PC-3 (cell line): ENCODE measurements at regions of chr19 and their contacts with region 1.

Region 1: DNA sequence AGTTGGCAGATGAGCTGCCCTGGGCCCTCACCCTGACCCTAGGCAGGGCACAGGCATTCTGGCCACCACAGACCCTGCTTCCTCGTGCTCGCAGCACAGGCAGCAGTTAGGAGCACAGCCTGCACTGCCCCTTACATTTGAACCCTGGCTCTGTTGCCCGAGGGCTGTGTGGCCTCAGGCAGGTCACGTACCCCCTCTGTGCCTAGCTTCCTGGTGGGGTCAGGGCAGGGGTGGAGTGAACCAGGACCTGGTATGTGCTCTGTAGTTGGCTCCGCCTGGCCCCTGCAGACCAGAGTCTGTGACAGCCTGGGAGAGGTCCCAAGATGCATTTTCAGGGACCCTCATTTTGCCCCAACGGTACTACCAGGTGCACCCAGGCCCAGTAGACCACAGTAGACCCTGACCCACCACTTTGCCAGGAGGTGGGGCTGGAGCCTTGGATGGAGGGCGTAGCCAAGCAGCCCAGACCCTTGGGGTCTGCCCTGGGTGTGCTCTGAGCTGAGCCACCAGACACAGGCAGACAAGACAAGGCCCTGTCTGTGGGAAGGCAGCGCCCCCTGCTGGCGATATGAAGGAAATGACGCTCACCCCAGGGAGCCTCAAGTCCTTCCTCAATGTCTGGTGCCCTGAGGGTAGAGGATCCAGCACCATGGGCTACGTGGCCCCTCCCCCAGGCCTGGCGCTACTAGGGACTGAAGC is 9.1 kb downstream of the LYL1 start:
- DNase-seq: peak; percentile 95
- ATAC-seq: peak; percentile 74
- H3K4me3 ChIP-seq: no peak overlapping the region
- H3K27ac ChIP-seq: no peak overlapping the region
- H3K4me1 ChIP-seq: peaks cover 11% of the 10 kb centered on the region; the same call in 1 of the 2 replicates
- H3K27me3 ChIP-seq: no peaks in the 10 kb centered on the region
- CTCF ChIP-seq: peak; percentile 100

Region 2: DNA sequence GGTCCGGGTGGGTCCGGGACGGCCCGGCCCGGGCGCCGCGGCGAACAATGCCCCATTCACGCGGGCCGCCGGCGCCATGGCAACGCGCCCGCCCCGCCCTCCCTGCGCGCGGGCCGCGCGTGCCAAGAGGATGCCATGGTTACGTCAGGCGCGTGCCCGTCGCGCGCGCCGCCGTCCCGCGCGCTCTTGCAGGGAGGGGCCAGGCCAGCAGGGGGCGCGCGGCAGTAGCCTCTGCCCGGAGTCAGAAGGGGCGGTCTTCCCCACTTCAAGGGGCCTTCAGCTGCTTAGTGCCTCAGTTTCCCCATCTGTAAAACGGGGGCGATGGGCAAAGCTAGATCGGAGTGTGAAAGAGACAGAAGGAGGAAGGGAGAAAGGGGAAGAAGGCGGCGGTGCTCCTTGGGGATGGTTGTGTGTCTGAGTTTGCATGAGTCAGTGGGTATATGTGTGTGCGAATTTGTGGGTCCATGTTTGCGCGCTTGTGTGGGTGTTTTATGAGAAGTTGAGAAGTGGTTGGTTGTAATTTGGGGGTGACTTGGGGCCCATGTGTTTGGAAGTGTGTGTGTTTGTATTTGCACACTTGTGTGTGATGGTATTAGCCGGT is 109.9 kb before region 1 on chr19:
- CTCF ChIA-PET with region 1: interaction called, 53 read pairs
- POLR2A ChIA-PET with region 1: no interaction called
- intact Hi-C with region 1: loop called (anchors 1 kb)
- DNase-seq: peak; percentile 89
- ATAC-seq: peak; percentile 84
- H3K4me3 ChIP-seq: peak overlapping the region; percentile 61
- H3K27ac ChIP-seq: no peak overlapping the region
- H3K4me1 ChIP-seq: no peaks in the 10 kb centered on the region
- H3K27me3 ChIP-seq: no peaks in the 10 kb centered on the region
- CTCF ChIP-seq: peak; percentile 94

Region 3: DNA sequence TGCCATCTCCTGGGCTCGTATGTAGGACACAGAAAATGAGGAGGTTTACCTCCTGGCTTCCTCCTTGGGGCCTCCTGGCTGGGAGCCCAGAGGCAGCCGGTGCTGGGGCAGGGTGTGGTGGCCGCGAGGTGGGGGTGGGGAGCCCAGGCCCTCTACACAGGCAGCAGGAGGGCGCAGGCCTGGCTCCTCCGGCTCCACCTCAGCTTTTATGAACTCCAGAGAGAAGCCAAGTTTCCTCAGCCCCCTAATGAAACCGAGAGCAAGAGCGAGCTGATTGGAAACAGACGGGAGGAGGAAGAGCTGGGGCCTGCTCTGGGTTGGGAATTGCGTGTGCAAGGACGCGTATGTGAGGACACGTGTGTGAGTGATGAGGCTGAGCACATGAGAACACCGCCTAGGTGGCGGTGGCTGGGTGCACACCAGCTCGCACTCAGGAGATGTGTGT is 14.0 kb before region 1 on chr19:
- CTCF ChIA-PET with region 1: no interaction called
- POLR2A ChIA-PET with region 1: no interaction called
- intact Hi-C with region 1: no loop called
- DNase-seq: no peak
- ATAC-seq: peak; percentile 43
- H3K4me3 ChIP-seq: no peak overlapping the region
- H3K27ac ChIP-seq: no peak overlapping the region
- H3K4me1 ChIP-seq: peaks cover 6% of the 10 kb centered on the region
- H3K27me3 ChIP-seq: no peaks in the 10 kb centered on the region
- CTCF ChIP-seq: no peak

Region 4: DNA sequence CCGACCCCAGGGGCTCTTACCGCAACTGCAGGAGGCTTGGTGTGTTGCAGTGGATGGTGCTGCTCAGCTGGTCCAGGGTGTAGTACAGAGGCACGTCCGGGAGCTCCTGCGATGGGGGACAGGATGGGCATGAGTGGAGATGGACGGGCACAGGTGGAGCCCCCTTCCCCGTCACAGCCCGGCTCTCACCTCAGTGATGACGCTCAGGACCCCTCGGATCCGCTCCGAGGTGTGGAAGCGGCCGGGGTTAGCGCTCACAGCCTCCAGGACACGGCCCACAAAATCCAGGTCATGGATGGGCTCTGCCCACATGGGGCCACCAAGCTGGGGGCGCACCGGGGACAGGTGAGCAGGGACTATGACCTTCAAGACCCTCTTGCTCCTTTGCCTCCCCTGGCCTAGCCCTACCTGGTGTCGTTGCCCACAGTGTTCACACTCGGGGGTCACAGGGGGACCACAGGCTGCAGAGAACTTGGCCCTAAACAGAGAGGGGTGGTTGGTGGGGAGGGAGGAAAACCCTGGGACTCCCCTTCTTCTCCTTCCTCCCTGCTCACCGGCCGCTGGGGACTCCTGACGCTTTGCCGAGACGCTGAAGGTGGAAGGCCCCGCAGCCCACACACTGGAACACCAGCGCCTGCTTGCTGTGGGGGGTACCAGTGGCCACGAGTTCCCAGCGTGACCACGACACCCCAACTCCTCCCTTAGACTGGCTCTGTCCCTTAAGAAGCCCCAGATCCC is 16.0 kb after region 1 on chr19:
- CTCF ChIA-PET with region 1: interaction called, 68 read pairs
- POLR2A ChIA-PET with region 1: interaction called, 3 read pairs
- intact Hi-C with region 1: loop called (anchors 2 kb)
- DNase-seq: no peak
- ATAC-seq: no peak
- H3K4me3 ChIP-seq: no peak overlapping the region
- H3K27ac ChIP-seq: no peak overlapping the region
- H3K4me1 ChIP-seq: no peaks in the 10 kb centered on the region
- H3K27me3 ChIP-seq: no peaks in the 10 kb centered on the region
- CTCF ChIP-seq: no peak